ENCODE measurements at regions of chr6 and their contacts with region 1.

Region 1: DNA sequence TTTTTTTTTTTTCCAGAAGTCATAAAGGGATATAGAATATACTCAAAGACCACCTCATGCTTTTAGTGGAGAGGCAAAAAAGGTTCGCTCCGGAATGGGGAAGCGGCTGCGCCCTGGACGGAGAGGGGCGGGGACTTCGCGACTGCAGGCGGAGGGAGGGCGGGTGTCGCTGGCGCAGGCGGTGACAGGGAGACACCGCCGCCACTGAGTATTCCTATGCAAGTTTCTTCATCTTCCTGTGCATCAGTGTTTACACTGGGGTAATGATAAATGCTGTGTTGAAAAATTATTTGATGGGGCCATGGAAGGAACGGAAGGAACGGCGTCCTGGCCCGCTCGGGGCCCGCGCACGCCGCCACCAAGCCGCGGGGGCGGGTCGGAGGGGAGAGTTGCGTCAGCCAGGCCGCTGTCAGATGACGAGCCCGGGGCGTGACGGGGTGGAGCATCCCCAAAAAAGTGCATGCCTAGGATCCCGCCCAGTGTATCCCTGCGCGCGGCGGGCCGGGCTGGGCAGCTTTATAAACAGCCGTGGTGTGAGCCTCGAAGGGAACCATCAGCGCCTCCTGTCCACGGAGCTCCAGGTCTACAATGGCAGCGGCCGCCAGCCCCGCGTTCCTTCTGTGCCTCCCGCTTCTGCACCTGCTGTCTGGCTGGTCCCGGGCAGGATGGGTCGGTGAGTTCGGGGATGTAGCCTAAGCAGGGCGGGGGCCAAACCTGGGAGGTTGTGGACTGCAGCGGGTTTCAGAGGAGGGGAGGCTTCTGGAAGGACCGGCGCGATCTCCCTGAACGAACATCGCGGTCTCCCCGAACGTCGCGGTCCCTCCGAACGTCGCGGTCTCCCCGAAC is at the start of gene ULBP1:
- DNase-seq: peak; percentile 37 to 85 (median 72)
- ATAC-seq: peak; percentile 75
- H3K4me3 ChIP-seq: peak within 1 kb of the TSS; percentile 63 to 74
- H3K4me3 Mint-ChIP-seq: peak within 1 kb of the TSS; percentile 92
- H3K27ac ChIP-seq: no peak within 1 kb of the TSS
- H3K27ac Mint-ChIP-seq: peak within 1 kb of the TSS; percentile 46
- H3K4me1 ChIP-seq: peaks cover 25% of the 10 kb centered on the region
- H3K4me1 Mint-ChIP-seq: peaks cover 25% of the 10 kb centered on the region
- H3K27me3 ChIP-seq: peaks cover 31 to 44% of the 10 kb centered on the region in 2 experiments
- H3K27me3 Mint-ChIP-seq: peaks cover 84% of the 10 kb centered on the region
- CTCF ChIP-seq: no peak
- total RNA-seq, gene ULBP1: 0.28 to 0.41 TPM

Region 2: GRCh38 chr6:149941583-149942431 is 21.9 kb before region 1 on chr6 and contains the start of gene ULBP2:
- CTCF ChIA-PET with region 1: interaction called, 3 read pairs
- POLR2A ChIA-PET with region 1: no interaction called
- intact Hi-C with region 1: loop called (anchors 1 kb)
- DNase-seq: peak; percentile 80 to 98 (median 91)
- ATAC-seq: peak; percentile 90
- H3K4me3 ChIP-seq: peak within 1 kb of the TSS; percentile 81 to 86
- H3K4me3 Mint-ChIP-seq: peak within 1 kb of the TSS; percentile 94
- H3K27ac ChIP-seq: peak within 1 kb of the TSS; percentile 26 to 50
- H3K27ac Mint-ChIP-seq: peak within 1 kb of the TSS; percentile 92
- H3K4me1 ChIP-seq: peaks cover 21% of the 10 kb centered on the region
- H3K4me1 Mint-ChIP-seq: peaks cover 31% of the 10 kb centered on the region
- H3K27me3 ChIP-seq: peaks cover 29% of the 10 kb centered on the region in 2 experiments
- H3K27me3 Mint-ChIP-seq: peaks cover 34% of the 10 kb centered on the region
- CTCF ChIP-seq: no peak
- total RNA-seq, gene ULBP2: 7.2 to 9.7 TPM